ENCODE measurements at regions of chr12 and their contacts with region 1.

Region 1: DNA sequence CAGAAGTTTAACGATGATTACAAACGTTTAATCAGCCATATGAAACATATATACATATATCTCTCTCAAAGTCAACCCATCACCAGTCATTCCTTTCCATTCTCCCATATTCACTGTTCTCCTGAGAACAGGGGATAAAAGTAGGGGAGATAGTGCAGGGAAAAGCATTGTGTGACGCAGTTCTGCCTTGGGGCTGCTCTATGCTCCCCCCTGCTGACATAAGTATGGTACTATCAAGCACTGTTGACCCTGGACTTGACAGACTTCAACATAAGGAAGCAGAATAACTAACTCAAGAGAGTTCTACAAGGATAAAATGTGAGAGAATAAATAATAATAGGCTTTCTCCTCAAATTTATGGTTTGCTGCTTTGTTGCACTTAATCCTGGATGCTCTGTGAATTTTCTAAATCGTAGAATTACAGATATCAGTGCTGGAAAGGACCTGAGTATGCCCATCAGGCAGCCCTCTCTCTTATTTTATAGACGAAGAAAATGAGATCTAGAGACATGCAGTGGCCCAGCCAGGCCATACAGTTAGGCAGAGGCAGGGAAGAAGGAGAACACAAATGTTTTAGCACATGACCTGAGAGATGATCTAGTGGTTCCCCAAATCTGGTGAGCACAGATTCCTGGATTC is 87.2 kb downstream of the SCN8A start:
- DNase-seq: peak in 4 of 9 experiments; percentile 11 to 56 (median 29)
- ATAC-seq: peak; percentile 70
- H3K4me3 ChIP-seq: no peak overlapping the region
- H3K4me3 Mint-ChIP-seq: no peak overlapping the region
- H3K27ac ChIP-seq: no peak overlapping the region
- H3K27ac Mint-ChIP-seq: no peak overlapping the region
- H3K4me1 ChIP-seq: no peaks in the 10 kb centered on the region
- H3K4me1 Mint-ChIP-seq: peaks cover 6% of the 10 kb centered on the region
- H3K27me3 ChIP-seq: no peaks in the 10 kb centered on the region
- H3K27me3 Mint-ChIP-seq: peaks cover 3% of the 10 kb centered on the region
- CTCF ChIP-seq: peak; percentile 63

Region 2: DNA sequence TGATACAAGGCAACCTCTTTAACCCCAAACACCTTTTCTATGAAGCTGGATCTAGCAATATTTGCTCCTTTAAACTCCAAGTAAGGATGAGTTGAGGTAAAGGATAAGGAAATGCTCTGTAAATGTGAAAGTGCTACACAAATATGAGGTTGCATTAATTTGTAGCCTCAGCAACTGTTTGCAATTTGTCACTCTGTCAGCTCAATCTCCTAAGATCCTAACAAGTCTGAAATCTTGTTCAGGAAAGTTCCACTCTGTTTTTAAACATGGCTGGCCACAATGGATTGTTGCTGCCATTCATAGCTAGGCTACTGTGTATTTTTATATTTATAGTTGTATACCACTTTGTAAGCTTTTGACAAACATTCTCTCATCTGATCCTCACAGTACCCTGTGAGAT is 35.9 kb before region 1 on chr12:
- CTCF ChIA-PET with region 1: no interaction called
- POLR2A ChIA-PET with region 1: interaction called, 3 read pairs
- intact Hi-C with region 1: loop called in 1 of 2 experiments (anchors 1 kb)
- DNase-seq: no peak
- ATAC-seq: no peak
- H3K4me3 ChIP-seq: no peak overlapping the region
- H3K4me3 Mint-ChIP-seq: no peak overlapping the region
- H3K27ac ChIP-seq: no peak overlapping the region
- H3K27ac Mint-ChIP-seq: no peak overlapping the region
- H3K4me1 ChIP-seq: no peaks in the 10 kb centered on the region
- H3K4me1 Mint-ChIP-seq: no peaks in the 10 kb centered on the region
- H3K27me3 ChIP-seq: no peaks in the 10 kb centered on the region
- H3K27me3 Mint-ChIP-seq: peaks cover 3% of the 10 kb centered on the region
- CTCF ChIP-seq: no peak